ENCODE measurements at regions of chr7 and their contacts with region 1.

Region 1: DNA sequence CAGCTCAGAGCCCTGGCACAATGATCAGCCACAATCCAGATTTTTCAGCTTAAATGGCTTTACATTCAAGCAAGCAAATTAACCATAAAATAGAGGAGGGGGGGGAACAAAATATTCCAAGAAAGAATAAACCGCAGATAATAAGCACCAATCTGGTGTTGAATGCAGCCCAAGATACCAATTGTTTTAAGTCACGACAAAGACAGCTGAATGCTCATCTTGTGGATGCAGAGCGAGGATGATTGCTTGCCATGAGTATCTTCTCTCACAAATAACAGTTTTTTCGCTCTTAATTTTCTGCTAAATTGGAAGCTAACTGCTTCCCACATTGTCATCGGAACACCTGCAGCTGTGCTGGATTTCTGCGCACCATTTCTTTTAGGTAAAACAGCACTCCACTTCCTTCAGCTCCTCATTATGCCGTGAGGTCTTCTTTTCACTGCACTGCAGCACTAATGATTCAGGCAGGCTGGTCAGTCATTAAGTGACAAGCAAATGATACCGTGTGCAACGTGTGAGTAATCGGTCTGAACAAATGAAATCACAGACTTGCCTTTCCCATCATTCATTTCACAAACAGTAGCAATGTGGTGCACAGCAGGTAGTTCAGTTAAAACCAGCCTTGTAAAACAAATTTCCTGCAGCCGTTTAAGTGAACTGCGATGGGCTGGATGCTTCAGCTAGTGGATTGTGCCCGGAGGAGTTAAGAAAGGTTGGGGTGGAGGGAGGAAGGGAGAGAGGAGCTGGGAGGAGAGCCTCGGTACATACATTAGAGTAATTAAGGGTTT is 106.4 kb upstream of the CDCA7L start:
- DNase-seq: no peak
- ATAC-seq: no peak
- H3K4me3 ChIP-seq: no peak overlapping the region
- H3K27ac ChIP-seq: no peak overlapping the region
- H3K4me1 ChIP-seq: no peaks in the 10 kb centered on the region
- H3K27me3 ChIP-seq: no peaks in the 10 kb centered on the region; a peak in 1 of 4 replicates
- CTCF ChIP-seq: no peak
- EP300 ChIP-seq: no peak
- POLR2A ChIP-seq: no peak
- RAD21 ChIP-seq: no peak

Region 2: GRCh38 chr7:22066484-22066883 is 14.4 kb after region 1 on chr7:
- CTCF ChIA-PET with region 1: no interaction called
- POLR2A ChIA-PET with region 1: no interaction called
- RAD21 ChIA-PET with region 1: no interaction called
- SMC1A ChIA-PET with region 1: interaction called, 3 read pairs
- in situ Hi-C with region 1: no loop called
- intact Hi-C with region 1: loop called (anchors 2 kb)
- DNase-seq: no peak
- ATAC-seq: no peak
- H3K4me3 ChIP-seq: no peak overlapping the region
- H3K27ac ChIP-seq: no peak overlapping the region
- H3K4me1 ChIP-seq: no peaks in the 10 kb centered on the region
- H3K27me3 ChIP-seq: no peaks in the 10 kb centered on the region; a peak in 1 of 4 replicates
- CTCF ChIP-seq: no peak
- EP300 ChIP-seq: no peak
- POLR2A ChIP-seq: no peak
- RAD21 ChIP-seq: no peak

Measured in GM12878 (cell line).